ENCODE measurements at regions of chr3 and their contacts with region 1.

Region 1: GRCh38 chr3:42819351-42819965 is 10.2 kb downstream of the ACKR2 start:
- DNase-seq: peak; percentile 54
- H3K4me3 ChIP-seq: no peak overlapping the region
- H3K27ac ChIP-seq: peak overlapping the region; percentile 12 to 64; a peak in 2 of 4 replicates
- H3K4me1 ChIP-seq: peaks cover 0 to 11% of the 10 kb centered on the region in 2 experiments; a peak in 2 of 4 replicates
- H3K27me3 ChIP-seq: no peaks in the 10 kb centered on the region
- CTCF ChIP-seq: peak; percentile 28; the same call in 1 of the 2 replicates
- EP300 ChIP-seq: no peak
- RAD21 ChIP-seq: no peak

Region 2: GRCh38 chr3:42721690-42722089 is 97.8 kb before region 1 on chr3:
- CTCF ChIA-PET with region 1: no interaction called
- POLR2A ChIA-PET with region 1: no interaction called
- DNase-seq: no peak
- H3K4me3 ChIP-seq: no peak overlapping the region
- H3K27ac ChIP-seq: no peak overlapping the region
- H3K4me1 ChIP-seq: no peaks in the 10 kb centered on the region
- H3K27me3 ChIP-seq: peaks cover 4% of the 10 kb centered on the region; the same call in 1 of the 2 replicates
- CTCF ChIP-seq: no peak
- EP300 ChIP-seq: no peak
- RAD21 ChIP-seq: no peak

Region 3: DNA sequence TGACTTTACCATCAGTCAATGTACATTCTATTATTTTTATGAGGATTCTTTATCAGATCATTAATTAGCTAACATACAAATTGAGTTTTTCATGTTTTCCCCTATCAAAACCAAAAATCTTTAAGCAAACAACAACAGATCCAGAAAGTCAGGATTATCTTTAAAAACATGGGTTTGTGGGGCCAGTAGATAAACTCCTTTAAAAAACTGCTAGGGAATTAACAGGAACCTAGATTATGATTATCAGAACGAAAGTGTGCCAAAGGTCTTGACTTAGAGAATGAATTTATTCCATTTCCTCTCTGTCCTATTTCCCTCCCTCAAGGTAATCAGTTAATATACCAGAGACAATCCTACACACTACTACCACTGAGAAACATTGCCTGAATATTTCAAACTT is 33.2 kb before region 1 on chr3:
- CTCF ChIA-PET with region 1: interaction called, 10 read pairs
- POLR2A ChIA-PET with region 1: no interaction called
- DNase-seq: no peak
- H3K4me3 ChIP-seq: no peak overlapping the region
- H3K27ac ChIP-seq: no peak overlapping the region
- H3K4me1 ChIP-seq: no peaks in the 10 kb centered on the region
- H3K27me3 ChIP-seq: no peaks in the 10 kb centered on the region
- CTCF ChIP-seq: no peak
- EP300 ChIP-seq: no peak
- RAD21 ChIP-seq: no peak

Region 4: GRCh38 chr3:42804106-42804830 is 15.2 kb before region 1 on chr3 and contains the start of gene HIGD1A:
- CTCF ChIA-PET with region 1: interaction called, 16 read pairs
- POLR2A ChIA-PET with region 1: interaction called, 5 read pairs
- DNase-seq: peak; percentile 99
- H3K4me3 ChIP-seq: peak within 1 kb of the TSS; percentile 85 to 89
- H3K27ac ChIP-seq: peak within 1 kb of the TSS; percentile 87 to 91
- H3K4me1 ChIP-seq: peaks cover 0 to 13% of the 10 kb centered on the region in 2 experiments; a peak in 3 of 4 replicates
- H3K27me3 ChIP-seq: no peaks in the 10 kb centered on the region
- CTCF ChIP-seq: no peak
- EP300 ChIP-seq: 0 out of 4 replicates have a peak, but pooled peaks of 1 of the 2 experiments have one; percentile 5
- RAD21 ChIP-seq: no peak
- polyA plus RNA-seq, gene HIGD1A: 72.1 and 112 TPM in 2 replicates

Region 5: DNA sequence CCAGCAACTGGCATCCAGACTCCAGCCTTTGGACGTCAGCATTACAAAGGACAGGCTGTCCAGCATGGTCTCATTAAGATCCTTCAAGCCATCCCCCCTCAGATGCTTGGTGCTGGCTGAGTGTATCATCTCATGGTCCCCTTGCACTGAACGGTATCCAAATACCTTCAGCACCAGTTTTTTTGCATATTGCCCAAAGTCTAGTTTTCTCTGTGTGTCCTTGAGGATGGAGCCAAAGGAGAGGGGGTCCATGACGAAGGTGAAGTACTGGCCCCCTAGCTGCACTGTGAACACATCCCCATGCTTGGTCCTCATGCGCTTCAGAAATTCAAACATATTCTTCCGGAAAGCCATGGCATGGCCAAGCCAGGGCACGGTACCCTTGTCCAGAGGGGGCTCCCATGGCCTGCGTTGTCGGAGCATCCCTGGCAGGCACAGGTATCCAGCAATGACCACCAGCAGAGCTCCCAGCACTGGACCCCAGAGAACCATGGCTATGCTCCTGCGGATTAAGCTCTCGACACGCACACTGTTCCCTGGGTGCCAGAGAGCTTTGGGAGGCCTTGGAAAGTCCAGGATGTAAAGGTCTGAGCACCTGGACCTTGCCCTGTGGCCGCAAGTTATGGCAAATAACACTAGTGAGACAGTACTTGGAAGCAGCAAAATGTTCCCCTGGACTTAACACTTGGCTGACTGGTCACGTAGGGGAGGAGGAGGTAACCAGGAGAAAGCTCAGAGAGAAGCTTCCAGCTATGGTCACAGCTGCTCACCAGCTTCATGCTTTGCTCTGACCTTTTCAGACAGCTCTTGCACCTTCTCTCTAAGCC is 56.1 kb after region 1 on chr3 and contains the start of gene CYP8B1:
- CTCF ChIA-PET with region 1: no interaction called
- POLR2A ChIA-PET with region 1: no interaction called
- DNase-seq: no peak
- H3K4me3 ChIP-seq: no peak within 1 kb of the TSS
- H3K27ac ChIP-seq: no peak within 1 kb of the TSS
- H3K4me1 ChIP-seq: peaks cover 0 to 24% of the 10 kb centered on the region in 2 experiments; a peak in 1 of 4 replicates
- H3K27me3 ChIP-seq: peaks cover 12% of the 10 kb centered on the region; the same call in 1 of the 2 replicates
- CTCF ChIP-seq: no peak
- EP300 ChIP-seq: no peak
- RAD21 ChIP-seq: no peak
- polyA plus RNA-seq, gene CYP8B1: not detected in 2 replicates

Measured in SK-N-SH (cell line).